Activated CD4-positive, alpha-beta T cell treated with anti-CD3 and anti-CD28 coated beads for 36 hours (primary cell): ENCODE measurements at regions of chr4 and their contacts with region 1.

Region 1: GRCh38 chr4:36285784-36286480 is 4.5 kb downstream of the DTHD1 start:
- DNase-seq: peak; percentile 72
- ATAC-seq: peak; percentile 94
- H3K4me3 Mint-ChIP-seq: peak overlapping the region; percentile 42
- H3K27ac Mint-ChIP-seq: peak overlapping the region; percentile 82
- H3K4me1 Mint-ChIP-seq: peaks cover 55% of the 10 kb centered on the region
- H3K27me3 Mint-ChIP-seq: peaks cover 3% of the 10 kb centered on the region

Region 2: DNA sequence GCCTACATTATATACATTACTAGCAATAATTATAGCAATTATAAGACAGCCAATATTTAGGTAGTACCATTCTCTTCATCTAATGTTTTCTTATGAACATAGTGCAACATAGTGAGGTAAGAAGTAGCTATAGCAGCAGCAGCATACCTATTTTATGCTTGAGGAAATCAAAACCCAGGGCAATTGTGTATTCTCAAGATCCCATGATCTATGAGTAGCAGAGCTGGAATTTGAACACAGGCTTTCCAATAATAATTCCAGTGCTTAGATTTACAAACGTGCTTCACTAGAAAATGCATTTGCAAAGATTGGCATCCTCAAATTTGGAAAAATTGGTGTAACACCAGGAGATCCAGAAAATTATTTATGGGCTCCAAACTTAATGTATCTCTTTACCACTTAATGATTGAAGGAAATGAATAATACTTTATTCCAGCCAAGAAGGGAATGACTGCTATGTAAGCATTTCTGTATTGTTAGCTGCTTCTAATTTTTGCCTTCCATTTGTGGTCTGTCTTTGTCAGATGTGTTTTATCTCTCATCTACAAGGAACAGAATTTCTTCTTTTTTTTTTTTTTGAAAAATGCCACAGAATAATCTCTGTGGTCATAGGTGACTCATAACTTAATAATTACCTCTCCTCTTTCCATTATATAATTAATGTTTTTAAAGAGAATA is 492.7 kb before region 1 on chr4:
- CTCF ChIA-PET with region 1: no interaction called
- POLR2A ChIA-PET with region 1: no interaction called
- intact Hi-C with region 1: no loop called
- DNase-seq: no peak
- ATAC-seq: no peak
- H3K4me3 Mint-ChIP-seq: no peak overlapping the region
- H3K27ac Mint-ChIP-seq: no peak overlapping the region
- H3K4me1 Mint-ChIP-seq: no peaks in the 10 kb centered on the region
- H3K27me3 Mint-ChIP-seq: no peaks in the 10 kb centered on the region

Region 3: GRCh38 chr4:36081185-36081584 is 204.7 kb before region 1 on chr4:
- CTCF ChIA-PET with region 1: no interaction called
- POLR2A ChIA-PET with region 1: no interaction called
- intact Hi-C with region 1: loop called in 1 of 2 experiments (anchors 1 kb)
- DNase-seq: peak; percentile 29
- ATAC-seq: peak; percentile 97
- H3K4me3 Mint-ChIP-seq: no peak overlapping the region
- H3K27ac Mint-ChIP-seq: no peak overlapping the region
- H3K4me1 Mint-ChIP-seq: peaks cover 5% of the 10 kb centered on the region
- H3K27me3 Mint-ChIP-seq: no peaks in the 10 kb centered on the region

Region 4: DNA sequence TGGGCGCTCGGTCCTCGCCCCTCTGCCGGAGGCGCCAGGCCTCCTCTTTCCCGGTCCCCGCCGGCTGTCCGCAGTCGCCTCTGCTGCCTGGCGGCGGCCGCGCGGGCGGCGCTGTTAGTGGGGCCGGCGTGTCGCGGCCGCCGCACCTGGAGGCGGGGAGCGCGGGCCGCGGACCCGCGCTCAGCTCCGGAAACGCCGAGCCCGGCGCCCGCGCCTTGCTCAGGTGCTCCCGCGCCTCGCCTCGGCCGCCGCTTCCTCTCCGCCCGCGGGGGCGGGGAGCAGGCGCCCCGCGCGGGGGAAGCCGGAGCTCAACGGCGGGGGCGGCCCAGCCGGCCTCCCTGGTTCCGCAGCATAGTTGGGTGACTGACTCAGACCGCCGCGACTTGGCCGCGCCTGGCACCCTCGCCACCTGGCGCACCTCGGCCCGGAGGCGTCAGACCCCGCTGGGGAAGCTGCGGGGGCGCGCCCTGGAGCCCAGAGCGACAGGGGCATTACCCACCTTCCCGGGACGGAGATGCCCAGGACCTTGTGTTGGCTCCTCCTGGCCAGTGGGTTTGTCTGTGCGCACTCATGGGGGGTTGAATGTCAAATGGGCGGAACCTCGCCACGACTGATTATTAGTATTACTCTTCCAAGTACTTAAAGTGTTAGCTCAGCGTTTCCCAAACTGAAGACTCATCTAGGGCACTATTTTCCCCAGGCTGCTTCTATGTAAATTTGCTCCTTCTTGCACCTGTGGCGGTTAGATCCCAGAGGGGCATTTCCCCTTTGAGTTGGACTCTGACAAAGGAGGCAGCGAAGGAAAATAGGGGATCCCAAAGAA is 41.5 kb before region 1 on chr4 and contains the start of gene ARAP2:
- CTCF ChIA-PET with region 1: interaction called, 12 read pairs
- POLR2A ChIA-PET with region 1: interaction called, 11 read pairs
- intact Hi-C with region 1: loop called (anchors 1 kb)
- DNase-seq: peak; percentile 84
- ATAC-seq: peak; percentile 72
- H3K4me3 Mint-ChIP-seq: peak within 1 kb of the TSS; percentile 87
- H3K27ac Mint-ChIP-seq: peak within 1 kb of the TSS; percentile 93
- H3K4me1 Mint-ChIP-seq: peaks cover 36% of the 10 kb centered on the region
- H3K27me3 Mint-ChIP-seq: no peaks in the 10 kb centered on the region
- total RNA-seq, gene ARAP2: 40.0 to 42.5 TPM

Region 5: DNA sequence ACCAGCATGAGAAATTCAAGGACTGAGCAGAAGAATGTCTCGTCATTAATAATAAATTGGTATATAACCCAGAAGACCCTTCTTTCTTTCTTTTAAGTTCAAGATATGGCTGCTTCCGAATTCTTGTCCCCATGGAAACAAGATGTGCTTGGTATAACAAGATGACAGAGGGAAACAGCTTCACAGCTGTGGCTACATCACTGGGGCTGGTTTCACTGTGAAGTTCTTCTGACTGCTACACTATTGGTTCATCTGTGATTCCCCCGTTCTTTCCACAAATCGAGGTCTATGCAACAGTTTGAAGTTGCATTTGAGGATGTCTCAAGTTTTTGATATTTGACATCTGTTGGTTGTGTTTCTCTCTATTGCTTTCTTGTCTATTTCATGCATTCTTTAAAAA is 16.8 kb before region 1 on chr4:
- CTCF ChIA-PET with region 1: no interaction called
- POLR2A ChIA-PET with region 1: interaction called, 7 read pairs
- intact Hi-C with region 1: loop called (anchors 2 kb)
- DNase-seq: peak; percentile 52
- ATAC-seq: peak; percentile 79
- H3K4me3 Mint-ChIP-seq: no peak overlapping the region
- H3K27ac Mint-ChIP-seq: no peak overlapping the region
- H3K4me1 Mint-ChIP-seq: peaks cover 42% of the 10 kb centered on the region
- H3K27me3 Mint-ChIP-seq: no peaks in the 10 kb centered on the region

Region 6: GRCh38 chr4:36325499-36325898 is 39.6 kb after region 1 on chr4:
- CTCF ChIA-PET with region 1: interaction called, 6 read pairs
- POLR2A ChIA-PET with region 1: interaction called, 9 read pairs
- intact Hi-C with region 1: loop called (anchors 1 kb)
- DNase-seq: no peak
- ATAC-seq: peak; percentile 43
- H3K4me3 Mint-ChIP-seq: no peak overlapping the region
- H3K27ac Mint-ChIP-seq: peak overlapping the region; percentile 86
- H3K4me1 Mint-ChIP-seq: peaks cover 66% of the 10 kb centered on the region
- H3K27me3 Mint-ChIP-seq: no peaks in the 10 kb centered on the region

Region 7: GRCh38 chr4:36394352-36394903 is 108.5 kb after region 1 on chr4:
- CTCF ChIA-PET with region 1: interaction called, 10 read pairs
- POLR2A ChIA-PET with region 1: interaction called, 5 read pairs
- intact Hi-C with region 1: loop called (anchors 1 kb)
- DNase-seq: peak; percentile 60
- ATAC-seq: peak; percentile 94
- H3K4me3 Mint-ChIP-seq: peak overlapping the region; percentile 25
- H3K27ac Mint-ChIP-seq: peak overlapping the region; percentile 93
- H3K4me1 Mint-ChIP-seq: peaks cover 20% of the 10 kb centered on the region
- H3K27me3 Mint-ChIP-seq: no peaks in the 10 kb centered on the region

Region 8: DNA sequence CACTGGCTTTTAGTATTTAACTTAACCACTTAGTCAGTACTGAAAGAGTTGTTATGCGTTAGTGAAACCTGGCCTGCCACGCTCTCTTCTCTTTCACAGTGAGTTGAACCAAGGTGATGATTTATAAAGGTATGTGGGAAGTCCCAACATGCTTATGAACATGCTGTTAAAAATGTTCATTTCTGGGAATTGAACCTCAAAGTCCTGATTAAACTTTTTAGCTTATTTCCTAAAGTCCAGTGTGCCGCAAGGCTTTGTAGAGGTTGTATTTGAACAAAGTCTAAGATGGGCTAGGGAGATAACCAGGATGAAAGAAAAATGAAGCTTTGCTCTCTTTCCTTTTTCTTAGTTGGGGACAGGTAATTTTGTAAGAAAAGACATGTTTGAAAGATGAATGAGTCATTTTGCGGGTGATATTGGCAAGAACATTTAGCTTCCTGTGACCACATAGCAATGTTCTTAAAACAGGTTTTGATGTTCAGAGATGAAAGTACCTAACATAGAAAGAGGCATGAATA is 265.8 kb after region 1 on chr4:
- CTCF ChIA-PET with region 1: no interaction called
- POLR2A ChIA-PET with region 1: no interaction called
- intact Hi-C with region 1: loop called in 1 of 2 experiments (anchors 2 kb)
- DNase-seq: peak; percentile 68
- ATAC-seq: peak; percentile 95
- H3K4me3 Mint-ChIP-seq: no peak overlapping the region
- H3K27ac Mint-ChIP-seq: peak overlapping the region; percentile 83
- H3K4me1 Mint-ChIP-seq: peaks cover 18% of the 10 kb centered on the region
- H3K27me3 Mint-ChIP-seq: peaks cover 8% of the 10 kb centered on the region

Region 9: GRCh38 chr4:37068580-37068979 is 782.6 kb after region 1 on chr4:
- CTCF ChIA-PET with region 1: no interaction called
- POLR2A ChIA-PET with region 1: no interaction called
- intact Hi-C with region 1: no loop called
- DNase-seq: peak; percentile 16
- ATAC-seq: no peak
- H3K4me3 Mint-ChIP-seq: no peak overlapping the region
- H3K27ac Mint-ChIP-seq: no peak overlapping the region
- H3K4me1 Mint-ChIP-seq: peaks cover 5% of the 10 kb centered on the region
- H3K27me3 Mint-ChIP-seq: no peaks in the 10 kb centered on the region